Lower leg skin (tissue), 4 donors: ENCODE measurements at regions of chr19 and their contacts with region 1.

Region 1: DNA sequence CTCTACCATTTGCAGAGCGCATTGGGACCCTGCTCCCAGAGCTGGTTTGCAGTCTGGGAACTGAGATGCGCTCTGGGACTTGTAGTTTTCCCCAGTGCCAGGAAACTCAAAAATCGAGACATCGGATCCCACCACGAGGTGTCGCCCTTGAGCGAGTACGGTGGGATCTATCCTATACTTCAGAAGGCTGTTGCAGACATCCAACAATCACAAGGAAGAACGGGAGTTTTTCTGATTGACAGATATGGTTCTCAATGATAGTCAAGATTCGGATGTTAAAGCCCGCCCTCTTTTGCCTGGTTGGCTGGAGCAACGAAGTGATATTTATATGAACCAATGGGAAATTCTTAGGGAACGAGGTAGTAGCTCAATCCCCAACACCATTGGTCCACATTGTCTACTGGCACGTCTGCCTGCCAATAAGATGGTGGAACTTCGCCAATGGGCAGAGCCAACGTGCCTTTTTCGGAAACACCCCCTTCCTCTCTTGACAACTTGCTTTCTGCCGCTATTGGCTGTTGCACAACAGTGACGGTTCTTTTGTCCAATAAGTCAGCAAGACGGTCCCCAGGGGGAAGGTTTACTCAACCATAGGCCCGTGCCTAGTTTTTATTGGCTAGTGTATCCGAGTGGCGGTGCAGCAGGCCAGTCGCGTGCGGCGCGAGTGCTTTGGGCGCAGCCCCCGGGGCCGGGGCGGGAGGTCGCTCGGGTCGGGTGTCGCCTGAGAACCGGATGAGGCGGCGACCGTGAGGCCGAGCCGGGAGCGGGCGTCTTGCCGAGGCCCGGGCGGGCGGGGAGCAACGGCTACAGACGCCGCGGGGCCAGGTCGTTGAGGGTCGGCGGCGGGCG is at the start of gene DNM2:
- DNase-seq: peak; percentile 99 to 100
- H3K4me3 ChIP-seq: peak within 1 kb of the TSS; percentile 73
- CTCF ChIP-seq: peak in 1 of 3 donors; percentile 38
- POLR2A ChIP-seq: no peak
- total RNA-seq, gene DNM2: 182 to 245 (median 218) TPM

Region 2: GRCh38 chr19:10864538-10864899 is 146.9 kb after region 1 on chr19:
- intact Hi-C with region 1: loop called (anchors 5 kb)
- DNase-seq: peak; percentile 82 to 97
- H3K4me3 ChIP-seq: no peak overlapping the region
- CTCF ChIP-seq: peak in 1 of 3 donors; percentile 66
- POLR2A ChIP-seq: no peak